ENCODE measurements at regions of chr16 and their contacts with region 1.

Region 1: GRCh38 chr16:2838928-2839327 is 8.8 kb downstream of the ZG16B start:
- DNase-seq: peak; percentile 90
- H3K4me3 ChIP-seq: no peak overlapping the region
- H3K27ac ChIP-seq: no peak overlapping the region
- H3K4me1 ChIP-seq: peaks cover 0 to 4% of the 10 kb centered on the region in 2 experiments; a peak in 1 of 4 replicates
- H3K27me3 ChIP-seq: no peaks in the 10 kb centered on the region
- CTCF ChIP-seq: peak; percentile 79
- EP300 ChIP-seq: no peak
- RAD21 ChIP-seq: peak; percentile 86

Region 2: DNA sequence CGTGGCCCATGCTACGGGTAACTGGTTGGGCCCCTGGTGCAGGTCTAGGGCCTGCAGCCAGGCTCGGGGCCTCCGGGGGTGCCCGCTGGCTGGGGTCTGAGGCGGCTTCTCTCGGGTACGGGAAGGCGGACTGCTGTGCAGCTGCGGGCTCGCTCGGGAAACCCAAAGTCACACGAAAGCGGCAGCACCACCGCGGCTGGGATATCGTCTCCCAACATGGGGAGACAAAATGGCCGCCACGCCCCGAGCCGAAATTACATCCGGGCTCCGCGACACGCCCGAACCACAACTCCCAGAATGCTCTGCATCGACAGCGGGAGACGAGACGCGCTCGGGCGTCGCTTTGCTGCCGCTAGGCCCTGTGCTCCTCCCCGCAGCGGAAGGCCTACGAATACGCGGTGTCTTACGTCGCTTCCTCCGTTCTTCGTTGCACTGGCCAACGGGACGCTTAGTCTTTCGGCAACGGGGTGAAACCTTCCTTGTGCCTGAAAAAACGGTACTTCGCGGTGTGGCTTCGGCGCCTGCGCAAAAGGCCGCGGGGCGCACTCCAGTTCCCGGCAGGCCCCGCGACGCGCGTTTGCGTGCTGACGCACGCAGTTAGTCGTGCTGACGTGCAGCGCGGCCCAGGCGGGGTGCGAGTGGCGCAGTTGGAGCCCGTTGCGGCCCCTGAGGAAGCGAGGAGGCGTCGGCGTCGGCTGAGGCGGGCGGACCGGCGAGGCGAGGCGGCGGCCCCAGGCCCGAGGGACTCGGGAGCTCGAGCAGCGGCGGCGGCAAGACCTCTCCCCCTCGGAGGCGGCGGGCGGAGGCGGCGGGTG is 86.7 kb before region 1 on chr16 and contains the start of gene SRRM2:
- CTCF ChIA-PET with region 1: interaction called, 12 read pairs
- POLR2A ChIA-PET with region 1: no interaction called
- DNase-seq: peak; percentile 95
- H3K4me3 ChIP-seq: peak within 1 kb of the TSS; percentile 76 to 98
- H3K27ac ChIP-seq: peak within 1 kb of the TSS; percentile 99 to 100
- H3K4me1 ChIP-seq: peaks cover 12 to 20% of the 10 kb centered on the region in 2 experiments; a peak in 3 of 4 replicates
- H3K27me3 ChIP-seq: no peaks in the 10 kb centered on the region
- CTCF ChIP-seq: no peak
- EP300 ChIP-seq: no peak
- RAD21 ChIP-seq: no peak
- polyA plus RNA-seq, gene SRRM2: 100 and 143 TPM in 2 replicates

Region 3: DNA sequence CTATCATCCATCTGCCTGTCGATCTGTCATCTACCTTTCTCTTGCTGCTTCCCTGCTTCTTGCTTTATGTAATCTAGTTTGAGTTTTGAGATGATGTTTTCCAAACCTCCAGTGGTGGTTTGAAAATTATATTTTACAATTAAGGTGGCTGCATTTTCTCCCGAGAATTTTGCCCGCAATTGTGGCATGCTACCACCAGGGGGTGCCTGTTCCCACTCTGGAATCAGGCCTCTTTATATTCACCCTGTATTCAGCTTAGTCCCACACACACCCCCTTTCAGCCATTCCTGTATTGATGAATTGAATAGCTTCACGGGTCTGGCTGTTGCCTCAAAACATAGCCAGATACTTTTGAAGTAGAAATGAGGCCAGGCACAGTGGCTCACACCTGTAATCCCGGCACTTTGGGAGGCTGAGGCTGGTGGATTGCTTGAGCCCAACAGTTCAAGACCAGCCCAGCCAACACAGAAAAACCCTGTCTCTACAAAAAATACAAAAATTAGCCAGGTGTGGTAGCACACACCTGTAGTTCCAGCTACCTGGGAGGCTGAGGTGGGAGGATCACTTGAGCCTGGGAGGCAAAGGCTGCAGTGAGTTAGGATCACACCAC is 15.9 kb after region 1 on chr16:
- CTCF ChIA-PET with region 1: interaction called, 34 read pairs
- POLR2A ChIA-PET with region 1: no interaction called
- DNase-seq: peak; percentile 46
- H3K4me3 ChIP-seq: no peak overlapping the region
- H3K27ac ChIP-seq: no peak overlapping the region
- H3K4me1 ChIP-seq: peaks cover 0 to 6% of the 10 kb centered on the region in 2 experiments; a peak in 1 of 4 replicates
- H3K27me3 ChIP-seq: no peaks in the 10 kb centered on the region; the same call in none of the 2 replicates
- CTCF ChIP-seq: peak; percentile 58
- EP300 ChIP-seq: no peak
- RAD21 ChIP-seq: no peak

Region 4: GRCh38 chr16:2883027-2883851 is 44.3 kb after region 1 on chr16 and contains the start of gene FLYWCH2:
- CTCF ChIA-PET with region 1: interaction called, 12 read pairs
- POLR2A ChIA-PET with region 1: interaction called, 4 read pairs
- DNase-seq: peak; percentile 95
- H3K4me3 ChIP-seq: peak within 1 kb of the TSS; percentile 73 to 84
- H3K27ac ChIP-seq: peak within 1 kb of the TSS; percentile 93 to 94
- H3K4me1 ChIP-seq: peaks cover 0 to 6% of the 10 kb centered on the region in 2 experiments; a peak in 1 of 4 replicates
- H3K27me3 ChIP-seq: no peaks in the 10 kb centered on the region
- CTCF ChIP-seq: no peak
- EP300 ChIP-seq: no peak; a peak in 1 of 4 replicates
- RAD21 ChIP-seq: no peak
- polyA plus RNA-seq, gene FLYWCH2: 56.4 and 64.8 TPM in 2 replicates

Region 5: DNA sequence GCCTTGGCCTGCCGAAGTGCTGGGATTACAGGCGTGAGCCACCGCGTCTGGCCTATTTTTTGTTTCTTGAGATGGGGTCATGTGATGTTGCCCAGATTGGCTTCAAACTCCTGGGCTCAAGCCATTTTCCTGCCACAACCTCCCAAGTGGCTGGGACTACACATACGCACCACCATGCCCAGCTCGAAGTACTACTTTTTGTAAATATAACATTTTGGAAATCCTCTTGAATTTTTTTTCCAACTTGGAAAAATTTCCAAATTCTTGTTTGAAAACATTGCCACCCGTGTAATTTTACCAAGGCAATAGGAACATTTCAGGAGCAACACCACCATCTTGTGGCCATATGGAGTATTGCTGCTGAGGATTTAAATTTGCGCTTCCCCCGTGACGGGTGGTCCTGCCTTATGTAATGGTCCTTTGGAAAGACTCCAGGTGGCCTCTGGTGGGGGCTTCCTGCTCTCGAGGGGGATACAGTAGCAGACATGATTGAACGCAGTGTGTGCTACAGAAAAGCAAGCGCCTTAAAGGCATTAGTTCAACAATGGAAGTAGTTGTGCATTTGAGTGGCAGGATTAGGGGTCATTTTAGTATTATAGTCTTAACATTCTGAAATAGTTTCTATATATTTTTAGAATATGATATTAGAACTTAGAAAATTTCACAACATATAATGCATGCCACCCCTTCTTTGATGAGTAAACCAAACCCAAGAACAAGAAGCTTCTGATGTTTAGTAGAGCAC is 80.8 kb after region 1 on chr16:
- CTCF ChIA-PET with region 1: interaction called, 25 read pairs
- POLR2A ChIA-PET with region 1: no interaction called
- DNase-seq: peak; percentile 84
- H3K4me3 ChIP-seq: peak overlapping the region in 1 of 2 experiments; percentile 38; a peak in 1 of 4 replicates
- H3K27ac ChIP-seq: peak overlapping the region in 1 of 2 experiments; percentile 46; a peak in 2 of 4 replicates
- H3K4me1 ChIP-seq: peaks cover 0 to 17% of the 10 kb centered on the region in 2 experiments; a peak in 3 of 4 replicates
- H3K27me3 ChIP-seq: no peaks in the 10 kb centered on the region
- CTCF ChIP-seq: peak; percentile 93
- EP300 ChIP-seq: no peak
- RAD21 ChIP-seq: peak; percentile 86